WTC11 (cell line): ENCODE measurements at regions of chr1 and their contacts with region 1.

Region 1: DNA sequence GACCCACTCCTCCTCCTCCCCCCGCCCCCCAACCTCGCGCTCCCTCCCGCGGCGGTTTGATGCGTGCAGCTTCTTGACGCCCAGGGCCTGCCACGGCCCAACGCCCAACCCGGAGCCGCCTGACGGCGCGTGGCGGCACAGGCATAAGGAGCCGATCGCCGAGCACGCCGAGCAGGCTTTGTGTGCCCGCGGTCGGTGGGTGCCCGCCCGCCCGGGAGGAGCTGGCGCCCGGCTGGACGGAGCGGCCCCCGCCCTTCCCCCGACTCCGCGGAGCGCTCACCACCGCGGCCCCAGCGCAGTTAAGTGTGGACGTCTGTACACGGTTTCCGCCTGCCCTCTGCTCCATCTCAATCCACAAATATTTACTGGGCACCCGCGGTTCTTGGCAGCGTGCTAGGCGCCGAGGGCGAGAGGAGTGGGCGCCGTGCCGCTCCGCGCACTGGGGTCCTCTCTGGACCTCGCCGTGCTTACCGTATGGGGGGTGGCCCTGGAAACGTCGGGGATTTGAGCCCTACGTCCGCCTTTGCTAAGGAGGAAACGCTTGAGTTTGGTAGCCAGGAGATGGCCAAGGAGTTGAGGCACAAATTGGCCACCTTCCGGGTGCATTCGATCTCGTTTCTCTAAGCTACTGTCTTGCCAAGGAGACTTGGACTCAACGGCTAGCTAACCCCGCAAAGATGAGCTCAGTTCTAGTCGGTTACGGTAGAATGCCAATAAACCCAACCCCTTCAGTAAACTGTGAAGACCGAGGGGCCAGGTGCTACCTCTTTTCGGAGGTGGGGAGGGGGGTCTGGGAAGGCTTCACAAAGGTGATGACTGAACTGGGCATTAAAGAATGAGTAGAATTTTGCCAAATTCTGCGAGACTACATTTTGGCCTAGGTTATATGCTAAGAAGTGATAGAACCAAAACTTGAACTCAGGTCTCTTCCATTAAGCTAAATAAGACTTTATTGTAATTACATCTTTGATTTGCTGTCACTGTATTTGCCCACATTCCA is 583 bp upstream of the HDGF start:
- DNase-seq: peak; percentile 97
- ATAC-seq: peak; percentile 67
- H3K4me3 Mint-ChIP-seq: peak overlapping the region; percentile 96
- H3K27ac Mint-ChIP-seq: peak overlapping the region; percentile 97
- H3K4me1 Mint-ChIP-seq: peaks cover 43% of the 10 kb centered on the region
- H3K27me3 Mint-ChIP-seq: no peaks in the 10 kb centered on the region
- CTCF ChIP-seq: no peak

Region 2: GRCh38 chr1:154974063-154974807 is 1777.8 kb before region 1 on chr1 and contains the start of gene CKS1B:
- CTCF ChIA-PET with region 1: no interaction called
- POLR2A ChIA-PET with region 1: no interaction called
- DNase-seq: peak; percentile 96
- ATAC-seq: peak; percentile 62
- H3K4me3 Mint-ChIP-seq: no peak within 1 kb of the TSS
- H3K27ac Mint-ChIP-seq: no peak within 1 kb of the TSS
- H3K4me1 Mint-ChIP-seq: peaks cover 28% of the 10 kb centered on the region
- H3K27me3 Mint-ChIP-seq: no peaks in the 10 kb centered on the region
- CTCF ChIP-seq: no peak
- total RNA-seq, gene CKS1B: 258 to 301 TPM (median 278 TPM) in 3 replicates

Region 3: GRCh38 chr1:156705918-156706656 is 46.0 kb before region 1 on chr1:
- CTCF ChIA-PET with region 1: interaction called, 11 read pairs
- POLR2A ChIA-PET with region 1: interaction called, 9 read pairs
- DNase-seq: peak; percentile 94
- ATAC-seq: peak; percentile 45
- H3K4me3 Mint-ChIP-seq: peak overlapping the region; percentile 84
- H3K27ac Mint-ChIP-seq: peak overlapping the region; percentile 96
- H3K4me1 Mint-ChIP-seq: peaks cover 62% of the 10 kb centered on the region
- H3K27me3 Mint-ChIP-seq: peaks cover 23% of the 10 kb centered on the region
- CTCF ChIP-seq: peak; percentile 96

Region 4: GRCh38 chr1:156740679-156741612 is 11.1 kb before region 1 on chr1 and contains the start of gene MRPL24:
- CTCF ChIA-PET with region 1: interaction called, 10 read pairs
- POLR2A ChIA-PET with region 1: interaction called, 36 read pairs
- DNase-seq: peak; percentile 98
- ATAC-seq: peak; percentile 86
- H3K4me3 Mint-ChIP-seq: peak within 1 kb of the TSS; percentile 90
- H3K27ac Mint-ChIP-seq: peak within 1 kb of the TSS; percentile 100
- H3K4me1 Mint-ChIP-seq: peaks cover 25% of the 10 kb centered on the region
- H3K27me3 Mint-ChIP-seq: no peaks in the 10 kb centered on the region
- CTCF ChIP-seq: no peak
- total RNA-seq, gene MRPL24: 35.1 to 37.4 TPM (median 35.2 TPM) in 3 replicates

Region 5: GRCh38 chr1:156767101-156767878 is 15.2 kb after region 1 on chr1 and contains the start of gene PRCC:
- CTCF ChIA-PET with region 1: interaction called, 9 read pairs
- POLR2A ChIA-PET with region 1: interaction called, 24 read pairs
- DNase-seq: peak; percentile 98
- ATAC-seq: peak; percentile 96
- H3K4me3 Mint-ChIP-seq: no peak within 1 kb of the TSS
- H3K27ac Mint-ChIP-seq: peak within 1 kb of the TSS; percentile 28; the same call in 1 of the 2 replicates
- H3K4me1 Mint-ChIP-seq: peaks cover 34% of the 10 kb centered on the region
- H3K27me3 Mint-ChIP-seq: no peaks in the 10 kb centered on the region
- CTCF ChIP-seq: no peak
- total RNA-seq, gene PRCC: 97.4 to 98.5 TPM (median 98.0 TPM) in 3 replicates

Region 6: GRCh38 chr1:156781585-156782186 is 29.6 kb after region 1 on chr1:
- CTCF ChIA-PET with region 1: no interaction called
- POLR2A ChIA-PET with region 1: no interaction called
- DNase-seq: no peak
- ATAC-seq: no peak
- H3K4me3 Mint-ChIP-seq: no peak overlapping the region
- H3K27ac Mint-ChIP-seq: no peak overlapping the region
- H3K4me1 Mint-ChIP-seq: no peaks in the 10 kb centered on the region
- H3K27me3 Mint-ChIP-seq: no peaks in the 10 kb centered on the region
- CTCF ChIP-seq: no peak

Region 7: DNA sequence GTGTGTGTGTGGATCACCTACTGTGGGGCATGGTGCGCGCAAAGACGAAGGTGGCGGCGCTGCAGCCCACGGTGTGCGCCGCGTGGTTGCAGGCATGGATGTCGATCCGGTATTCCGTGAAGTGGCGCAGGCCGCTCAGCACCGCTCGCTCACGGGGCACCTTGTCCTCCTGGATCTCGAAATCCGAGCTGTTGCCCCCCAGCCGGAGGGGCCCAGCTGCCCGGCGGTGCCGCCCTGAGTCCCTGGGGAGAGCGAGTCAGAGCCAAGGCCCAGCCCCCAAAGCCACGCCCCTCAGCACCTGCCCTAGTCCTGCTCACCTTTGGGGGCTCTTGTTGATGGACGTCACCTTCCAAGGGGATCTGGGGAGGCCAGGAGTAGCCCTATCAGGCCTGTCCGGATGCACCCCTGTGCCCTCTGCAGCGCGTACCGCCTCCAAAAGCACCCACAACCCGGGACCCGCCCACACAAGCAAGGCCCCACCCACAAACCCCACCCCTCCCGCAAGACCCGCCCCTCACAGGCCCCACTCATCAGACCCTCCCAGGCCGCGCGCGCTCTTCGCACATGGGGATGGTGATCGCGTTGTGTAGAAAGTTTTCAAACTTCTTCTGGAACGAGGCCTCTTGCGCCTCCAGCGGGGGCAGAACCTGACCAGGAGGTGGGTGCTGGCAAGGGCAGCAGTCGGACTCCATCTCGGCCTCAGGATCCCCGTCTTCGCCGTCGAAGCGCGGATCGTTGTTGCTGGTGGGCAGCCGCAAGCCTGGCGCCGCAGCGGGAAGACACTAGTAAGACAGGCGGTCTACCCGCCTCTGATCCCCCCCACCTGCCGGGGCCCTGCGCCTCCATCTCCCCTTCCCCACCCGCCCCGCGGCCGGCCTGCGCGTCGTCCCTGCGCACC is 93.2 kb after region 1 on chr1:
- CTCF ChIA-PET with region 1: no interaction called
- POLR2A ChIA-PET with region 1: no interaction called
- DNase-seq: peak; percentile 54
- ATAC-seq: peak; percentile 53
- H3K4me3 Mint-ChIP-seq: peak overlapping the region; percentile 72
- H3K27ac Mint-ChIP-seq: no peak overlapping the region
- H3K4me1 Mint-ChIP-seq: peaks cover 16% of the 10 kb centered on the region
- H3K27me3 Mint-ChIP-seq: peaks cover 94% of the 10 kb centered on the region
- CTCF ChIP-seq: no peak

Region 8: DNA sequence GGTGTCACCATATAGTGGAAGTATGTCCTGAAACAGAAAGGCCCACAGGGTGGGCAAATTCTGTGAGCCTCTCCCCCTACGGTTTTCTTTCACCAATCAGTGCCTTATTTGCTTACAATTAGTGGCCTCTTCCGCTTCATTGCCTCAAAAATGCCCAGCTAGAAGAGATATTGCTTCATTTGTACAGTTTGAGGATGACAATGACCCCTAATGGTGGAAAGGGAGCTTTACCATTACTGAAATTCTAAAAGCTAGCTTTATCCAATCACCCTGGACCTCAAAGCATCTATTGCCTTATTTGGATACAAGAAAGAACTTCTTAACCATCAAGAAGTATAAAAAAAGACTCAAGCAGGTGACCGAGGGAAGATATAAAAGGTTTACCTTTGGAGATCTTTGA is 218.0 kb after region 1 on chr1:
- CTCF ChIA-PET with region 1: no interaction called
- POLR2A ChIA-PET with region 1: no interaction called
- DNase-seq: no peak
- ATAC-seq: no peak
- H3K4me3 Mint-ChIP-seq: no peak overlapping the region
- H3K27ac Mint-ChIP-seq: no peak overlapping the region
- H3K4me1 Mint-ChIP-seq: peaks cover 6% of the 10 kb centered on the region
- H3K27me3 Mint-ChIP-seq: no peaks in the 10 kb centered on the region
- CTCF ChIP-seq: no peak